Endothelial cell of umbilical vein (primary cell): ENCODE measurements at regions of chr1 and their contacts with region 1.

Region 1: DNA sequence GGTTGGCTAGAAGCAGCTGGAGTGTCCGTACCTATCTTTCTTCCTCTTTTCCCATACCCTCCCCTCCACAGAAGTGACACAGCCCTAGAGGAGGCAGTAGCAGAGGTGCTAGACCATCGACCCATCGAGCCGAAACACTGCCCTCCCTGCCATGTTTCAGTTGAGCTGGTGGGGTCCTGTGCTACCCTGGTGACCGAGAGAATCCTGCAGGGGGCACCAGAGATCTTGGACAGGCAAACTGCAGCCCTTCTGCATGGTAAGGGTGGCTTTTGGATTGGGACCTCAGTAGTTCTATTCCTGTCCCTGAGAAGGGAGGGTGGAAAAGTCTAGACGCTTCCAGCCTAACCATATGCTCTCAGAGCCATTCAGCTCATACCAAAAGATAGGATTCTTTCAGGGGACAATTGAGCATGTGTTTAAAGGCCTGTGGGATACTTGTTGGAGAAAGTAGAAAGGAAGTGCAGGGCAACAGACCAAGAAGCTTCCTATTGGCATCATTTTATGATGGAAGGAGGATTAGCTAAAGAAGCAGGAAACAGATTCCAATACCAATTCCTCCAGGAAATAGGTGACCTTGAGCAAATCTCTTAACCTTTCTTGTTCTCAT is 11.7 kb upstream of the BNIPL start:
- DNase-seq: peak; percentile 74
- H3K4me3 ChIP-seq: no peak overlapping the region
- H3K27ac ChIP-seq: no peak overlapping the region
- H3K4me1 ChIP-seq: no peaks in the 10 kb centered on the region
- H3K27me3 ChIP-seq: no peaks in the 10 kb centered on the region
- CTCF ChIP-seq: peak; percentile 76 to 88
- POLR2A ChIP-seq: no peak

Region 2: GRCh38 chr1:150765296-150765976 is 259.2 kb before region 1 on chr1 and contains the start of gene CTSS:
- CTCF ChIA-PET with region 1: no interaction called
- POLR2A ChIA-PET with region 1: no interaction called
- dilution Hi-C with region 1: no loop called
- intact Hi-C with region 1: no loop called
- DNase-seq: peak; percentile 58
- H3K4me3 ChIP-seq: peak within 1 kb of the TSS in 1 of 3 experiments; percentile 6
- H3K27ac ChIP-seq: peak within 1 kb of the TSS; percentile 80
- H3K4me1 ChIP-seq: peaks cover 23% of the 10 kb centered on the region
- H3K27me3 ChIP-seq: no peaks in the 10 kb centered on the region
- CTCF ChIP-seq: no peak
- POLR2A ChIP-seq: no peak
- total RNA-seq, gene CTSS: 5.7 and 11.1 TPM in 2 replicates

Region 3: DNA sequence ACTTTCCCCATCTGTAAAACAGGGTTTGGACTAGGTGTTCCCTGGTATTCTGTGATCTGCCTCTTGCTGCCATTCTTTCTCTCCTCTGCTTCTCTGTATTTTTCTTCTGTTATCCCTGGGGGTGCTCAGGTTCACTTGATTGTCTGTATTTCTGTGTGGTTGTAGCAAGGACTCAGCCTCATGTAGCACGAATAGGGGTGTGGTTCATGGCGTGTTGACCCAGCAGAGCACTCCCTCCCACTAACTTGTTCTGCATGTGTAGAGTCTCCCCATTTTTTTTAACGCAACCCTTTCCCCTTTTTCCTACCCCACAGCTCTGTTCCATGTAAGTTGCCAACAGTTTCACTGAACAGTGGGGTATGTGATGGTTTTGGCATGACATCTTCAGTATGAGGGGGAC is 10.5 kb after region 1 on chr1:
- CTCF ChIA-PET with region 1: interaction called, 10 read pairs
- POLR2A ChIA-PET with region 1: no interaction called
- dilution Hi-C with region 1: no loop called
- intact Hi-C with region 1: no loop called
- DNase-seq: no peak
- H3K4me3 ChIP-seq: no peak overlapping the region
- H3K27ac ChIP-seq: no peak overlapping the region
- H3K4me1 ChIP-seq: no peaks in the 10 kb centered on the region
- H3K27me3 ChIP-seq: no peaks in the 10 kb centered on the region
- CTCF ChIP-seq: no peak
- POLR2A ChIP-seq: no peak

Region 4: GRCh38 chr1:151047925-151048645 is 23.4 kb after region 1 on chr1:
- CTCF ChIA-PET with region 1: interaction called, 25 read pairs
- POLR2A ChIA-PET with region 1: no interaction called
- dilution Hi-C with region 1: no loop called
- intact Hi-C with region 1: loop called (anchors 1 kb)
- DNase-seq: peak; percentile 84
- H3K4me3 ChIP-seq: peak overlapping the region; percentile 66 to 76 (median 73)
- H3K27ac ChIP-seq: peak overlapping the region; percentile 26
- H3K4me1 ChIP-seq: peaks cover 8% of the 10 kb centered on the region
- H3K27me3 ChIP-seq: no peaks in the 10 kb centered on the region
- CTCF ChIP-seq: peak; percentile 40 to 74
- POLR2A ChIP-seq: peak; percentile 65

Region 5: DNA sequence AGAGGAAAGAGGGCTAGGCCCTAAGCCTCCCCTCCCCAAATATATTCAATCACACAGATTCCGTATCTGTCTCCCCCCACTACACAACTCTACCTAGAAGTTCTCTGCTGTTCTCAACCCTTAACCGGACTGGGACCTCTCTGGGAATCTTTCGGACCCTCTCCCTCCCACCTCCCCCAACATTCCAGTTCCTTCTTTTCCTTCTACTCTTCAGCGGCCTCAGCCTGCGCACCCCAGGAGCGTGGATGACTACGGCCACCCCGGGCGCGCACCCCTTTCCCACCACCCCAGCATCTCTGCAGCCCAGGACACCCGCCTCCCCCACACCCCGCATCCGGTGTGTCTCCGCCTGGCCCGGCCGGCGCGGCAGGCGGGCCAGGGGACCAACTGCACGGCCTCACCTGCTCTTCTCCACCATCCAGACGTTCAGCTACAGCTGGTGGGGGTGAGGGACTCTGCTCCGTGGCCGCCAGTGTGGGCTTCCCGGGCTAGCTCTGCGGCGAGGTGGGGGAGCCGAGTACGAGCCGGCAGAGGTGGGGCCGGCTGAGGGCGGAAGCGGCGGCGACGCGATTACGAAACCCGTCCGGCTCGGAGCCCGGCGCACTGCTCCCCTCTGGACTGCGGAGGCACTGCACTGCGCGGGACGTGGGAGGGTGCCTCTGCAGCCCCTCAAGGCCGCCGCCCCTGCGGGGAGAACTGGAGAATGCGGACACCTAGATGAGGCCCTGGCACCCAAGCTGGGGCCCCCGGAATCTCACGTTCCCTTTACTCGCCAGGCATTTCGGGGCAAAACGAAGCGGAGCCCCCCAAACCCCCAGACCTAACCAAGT is 34.6 kb after region 1 on chr1 and contains the start of gene CDC42SE1:
- CTCF ChIA-PET with region 1: interaction called, 19 read pairs
- POLR2A ChIA-PET with region 1: no interaction called
- dilution Hi-C with region 1: no loop called
- intact Hi-C with region 1: no loop called
- DNase-seq: peak; percentile 87
- H3K4me3 ChIP-seq: peak within 1 kb of the TSS; percentile 82 to 94 (median 91)
- H3K27ac ChIP-seq: peak within 1 kb of the TSS; percentile 91
- H3K4me1 ChIP-seq: peaks cover 33% of the 10 kb centered on the region
- H3K27me3 ChIP-seq: no peaks in the 10 kb centered on the region
- CTCF ChIP-seq: peak; percentile 60 to 88
- POLR2A ChIP-seq: peak; percentile 89
- total RNA-seq, gene CDC42SE1: 85.9 and 92.7 TPM in 2 replicates

Region 6: DNA sequence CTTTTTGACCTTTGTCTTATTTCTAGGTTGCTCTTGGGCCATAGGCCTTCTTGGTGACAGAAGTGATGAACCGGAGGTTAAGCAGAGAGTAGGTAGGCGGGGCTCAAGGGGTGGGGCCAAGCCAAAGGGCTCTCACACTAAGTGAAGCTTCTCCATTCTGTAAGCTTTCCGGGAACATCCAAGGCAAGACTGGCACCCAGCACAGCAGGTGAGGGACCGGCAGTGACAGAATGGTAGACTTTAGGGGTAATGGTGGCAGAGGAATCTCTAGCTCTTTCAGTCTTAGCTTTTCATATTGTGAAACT is 131.8 kb after region 1 on chr1 and contains the start of gene TNFAIP8L2:
- CTCF ChIA-PET with region 1: interaction called, 27 read pairs
- POLR2A ChIA-PET with region 1: no interaction called
- dilution Hi-C with region 1: no loop called
- intact Hi-C with region 1: loop called (anchors 1 kb)
- DNase-seq: no peak
- H3K4me3 ChIP-seq: no peak within 1 kb of the TSS
- H3K27ac ChIP-seq: peak within 1 kb of the TSS; percentile 25
- H3K4me1 ChIP-seq: peaks cover 18% of the 10 kb centered on the region
- H3K27me3 ChIP-seq: no peaks in the 10 kb centered on the region
- CTCF ChIP-seq: no peak
- POLR2A ChIP-seq: no peak
- total RNA-seq, gene TNFAIP8L2: not detected in 2 replicates